SK-N-SH (cell line): ENCODE measurements at regions of chr14 and their contacts with region 1.

Region 1: DNA sequence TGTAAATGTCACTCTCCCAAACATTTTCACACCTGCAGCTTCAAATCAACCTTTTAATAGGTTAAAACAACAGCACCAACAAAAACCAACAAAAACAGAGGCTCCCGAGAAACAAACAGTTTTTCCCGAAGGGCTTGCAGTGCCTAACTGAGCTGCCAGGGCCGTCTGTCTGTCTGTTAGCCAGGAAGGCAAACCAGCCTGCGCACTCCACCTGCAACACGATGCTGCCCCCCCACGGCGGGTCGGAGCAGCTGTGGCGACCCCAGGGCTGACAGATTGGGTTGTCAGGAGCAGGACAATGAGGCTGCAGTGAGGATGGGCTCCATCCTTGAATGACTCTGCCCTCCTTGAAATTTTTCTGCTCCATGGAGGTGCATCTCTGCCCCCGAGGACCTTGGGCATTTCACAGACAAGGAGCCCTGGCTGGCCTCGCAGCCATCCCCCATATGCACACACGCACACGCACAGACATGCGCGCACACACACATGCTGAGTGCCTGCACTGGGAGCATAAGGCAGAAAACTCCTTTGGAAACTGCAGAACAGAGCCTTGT is 2.6 kb downstream of the RTL1 start:
- DNase-seq: peak; percentile 81
- H3K4me3 ChIP-seq: peak overlapping the region in 1 of 2 experiments; percentile 48; a peak in 2 of 4 replicates
- H3K27ac ChIP-seq: peak overlapping the region in 1 of 2 experiments; percentile 99; a peak in 2 of 4 replicates
- H3K4me1 ChIP-seq: peaks cover 0 to 79% of the 10 kb centered on the region in 2 experiments; a peak in 3 of 4 replicates
- H3K27me3 ChIP-seq: peaks cover 6% of the 10 kb centered on the region; the same call in 1 of the 2 replicates
- CTCF ChIP-seq: peak; percentile 46
- EP300 ChIP-seq: no peak
- RAD21 ChIP-seq: peak; percentile 88

Region 2: GRCh38 chr14:100440187-100440631 is 460.7 kb before region 1 on chr14:
- CTCF ChIA-PET with region 1: interaction called, 57 read pairs
- POLR2A ChIA-PET with region 1: interaction called, 7 read pairs
- DNase-seq: peak; percentile 66
- H3K4me3 ChIP-seq: peak overlapping the region; percentile 0 to 12; a peak in 2 of 4 replicates
- H3K27ac ChIP-seq: peak overlapping the region; percentile 68 to 100
- H3K4me1 ChIP-seq: peaks cover 34 to 95% of the 10 kb centered on the region in 2 experiments
- H3K27me3 ChIP-seq: no peaks in the 10 kb centered on the region
- CTCF ChIP-seq: peak; percentile 72
- EP300 ChIP-seq: no peak
- RAD21 ChIP-seq: peak; percentile 89

Region 3: DNA sequence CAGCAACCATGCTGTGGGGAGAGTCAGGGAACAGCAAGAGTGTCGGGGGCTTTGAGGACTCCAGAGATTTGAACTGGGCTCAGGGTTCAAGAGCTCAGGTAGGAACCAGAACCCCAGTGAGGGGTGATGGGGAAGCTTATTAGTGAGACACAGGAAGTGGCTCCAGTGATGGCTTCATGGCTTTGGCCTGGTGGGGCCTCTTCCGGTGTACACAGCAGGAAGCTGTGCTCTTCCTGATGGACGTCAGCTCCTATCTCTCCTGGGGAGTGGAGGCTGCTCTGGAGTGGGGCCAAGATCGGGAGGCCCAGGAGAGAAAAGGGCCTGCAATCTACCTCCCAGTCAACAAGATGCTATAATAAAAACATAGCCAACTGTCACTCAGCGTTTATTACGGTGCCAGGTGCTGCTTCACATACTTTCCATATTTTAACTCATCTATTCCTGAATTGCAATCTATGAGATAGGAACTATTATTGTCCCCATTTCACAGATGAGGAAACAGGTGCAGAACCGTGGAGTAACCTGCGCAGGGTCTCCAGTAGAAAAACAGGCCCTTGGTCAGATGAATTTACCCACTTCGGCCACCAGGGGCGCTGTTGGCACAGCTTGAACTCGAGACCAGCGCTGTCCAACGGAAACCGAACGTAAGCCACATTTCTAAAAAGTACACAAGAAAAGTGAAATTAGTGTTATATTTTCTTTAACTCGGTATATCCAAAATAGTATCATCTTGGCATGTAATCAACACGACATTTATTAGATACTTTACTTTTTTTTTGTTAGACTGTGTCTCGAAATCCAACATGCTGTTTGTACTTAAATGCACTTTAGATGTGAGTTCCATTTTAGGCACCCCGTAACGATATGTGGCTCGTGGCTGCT is 237.8 kb before region 1 on chr14:
- CTCF ChIA-PET with region 1: interaction called, 52 read pairs
- POLR2A ChIA-PET with region 1: interaction called, 3 read pairs
- DNase-seq: peak; percentile 85
- H3K4me3 ChIP-seq: no peak overlapping the region; a peak in 1 of 4 replicates
- H3K27ac ChIP-seq: peak overlapping the region in 1 of 2 experiments; percentile 77; a peak in 2 of 4 replicates
- H3K4me1 ChIP-seq: peaks cover 0 to 48% of the 10 kb centered on the region in 2 experiments; a peak in 1 of 4 replicates
- H3K27me3 ChIP-seq: no peaks in the 10 kb centered on the region
- CTCF ChIP-seq: peak; percentile 96
- EP300 ChIP-seq: no peak
- RAD21 ChIP-seq: peak; percentile 89

Region 4: GRCh38 chr14:100736234-100737180 is 164.4 kb before region 1 on chr14:
- CTCF ChIA-PET with region 1: interaction called, 16 read pairs
- POLR2A ChIA-PET with region 1: interaction called, 18 read pairs
- DNase-seq: peak; percentile 69
- H3K4me3 ChIP-seq: no peak overlapping the region
- H3K27ac ChIP-seq: peak overlapping the region in 1 of 2 experiments; percentile 17; a peak in 2 of 4 replicates
- H3K4me1 ChIP-seq: peaks cover 0 to 40% of the 10 kb centered on the region in 2 experiments; a peak in 1 of 4 replicates
- H3K27me3 ChIP-seq: no peaks in the 10 kb centered on the region
- CTCF ChIP-seq: no peak
- EP300 ChIP-seq: no peak
- RAD21 ChIP-seq: no peak

Region 5: GRCh38 chr14:100887728-100888335 is 13.1 kb before region 1 on chr14:
- CTCF ChIA-PET with region 1: interaction called, 13 read pairs
- POLR2A ChIA-PET with region 1: interaction called, 4 read pairs
- DNase-seq: no peak
- H3K4me3 ChIP-seq: no peak overlapping the region
- H3K27ac ChIP-seq: peak overlapping the region in 1 of 2 experiments; percentile 17; a peak in 1 of 4 replicates
- H3K4me1 ChIP-seq: peaks cover 3 to 51% of the 10 kb centered on the region in 2 experiments; a peak in 3 of 4 replicates
- H3K27me3 ChIP-seq: no peaks in the 10 kb centered on the region
- CTCF ChIP-seq: no peak
- EP300 ChIP-seq: no peak
- RAD21 ChIP-seq: no peak

Region 6: GRCh38 chr14:101225450-101226152 is 324.7 kb after region 1 on chr14:
- CTCF ChIA-PET with region 1: interaction called, 11 read pairs
- POLR2A ChIA-PET with region 1: interaction called, 46 read pairs
- DNase-seq: no peak
- H3K4me3 ChIP-seq: no peak overlapping the region
- H3K27ac ChIP-seq: peak overlapping the region in 1 of 2 experiments; percentile 97; a peak in 2 of 4 replicates
- H3K4me1 ChIP-seq: peaks cover 0 to 72% of the 10 kb centered on the region in 2 experiments; a peak in 1 of 4 replicates
- H3K27me3 ChIP-seq: no peaks in the 10 kb centered on the region
- CTCF ChIP-seq: no peak
- EP300 ChIP-seq: no peak
- RAD21 ChIP-seq: no peak

Region 7: DNA sequence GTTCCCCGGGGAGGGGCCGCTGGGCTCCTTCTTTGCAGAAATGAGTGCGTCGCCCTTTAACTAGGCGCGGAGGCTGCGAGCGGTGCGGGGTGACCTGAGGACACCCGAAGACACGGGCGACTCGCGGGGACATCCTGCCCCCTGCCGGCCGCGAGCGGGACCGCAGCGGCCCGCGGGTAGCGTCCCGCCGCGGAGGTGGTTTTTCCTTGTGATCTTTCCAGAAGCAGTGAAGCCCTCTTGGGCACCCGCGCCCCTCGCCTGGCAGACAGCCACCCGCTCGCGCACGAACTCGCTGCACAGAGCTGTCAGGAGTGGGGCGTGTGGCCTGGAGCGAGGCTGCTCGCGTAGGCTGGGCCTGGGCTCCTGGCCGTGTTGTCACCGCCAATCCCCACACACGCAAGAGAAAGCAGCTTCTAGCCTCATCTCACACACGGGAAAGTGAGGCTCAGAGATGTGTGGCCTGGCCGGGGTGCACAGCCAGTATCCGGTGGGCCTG is 727.6 kb after region 1 on chr14:
- CTCF ChIA-PET with region 1: interaction called, 22 read pairs
- POLR2A ChIA-PET with region 1: interaction called, 4 read pairs
- DNase-seq: peak; percentile 93
- H3K4me3 ChIP-seq: peak overlapping the region in 1 of 2 experiments; percentile 49; a peak in 1 of 4 replicates
- H3K27ac ChIP-seq: peak overlapping the region in 1 of 2 experiments; percentile 96; a peak in 2 of 4 replicates
- H3K4me1 ChIP-seq: peaks cover 0 to 36% of the 10 kb centered on the region in 2 experiments; a peak in 2 of 4 replicates
- H3K27me3 ChIP-seq: no peaks in the 10 kb centered on the region; the same call in 1 of the 2 replicates
- CTCF ChIP-seq: peak; percentile 88
- EP300 ChIP-seq: no peak; a peak in 1 of 4 replicates
- RAD21 ChIP-seq: peak; percentile 95